H1 (cell line): ENCODE measurements at regions of chr20 and their contacts with region 1.

Region 1: GRCh38 chr20:32999603-33000250 is 4.5 kb downstream of the SUN5 start:
- DNase-seq: no peak
- H3K4me3 ChIP-seq: no peak overlapping the region
- H3K27ac ChIP-seq: no peak overlapping the region
- H3K4me1 ChIP-seq: no peaks in the 10 kb centered on the region; a peak in 1 of 7 replicates
- H3K27me3 ChIP-seq: no peaks in the 10 kb centered on the region
- CTCF ChIP-seq: no peak
- EP300 ChIP-seq: no peak
- POLR2A ChIP-seq: no peak
- RAD21 ChIP-seq: no peak

Region 2: GRCh38 chr20:32982617-32983458 is 16.9 kb before region 1 on chr20:
- CTCF ChIA-PET with region 1: interaction called, 53 read pairs
- POLR2A ChIA-PET with region 1: interaction called, 3 read pairs
- DNase-seq: no peak
- H3K4me3 ChIP-seq: no peak overlapping the region
- H3K27ac ChIP-seq: no peak overlapping the region
- H3K4me1 ChIP-seq: no peaks in the 10 kb centered on the region; a peak in 1 of 7 replicates
- H3K27me3 ChIP-seq: 0 out of 7 replicates have a peak, but pooled peaks cover 0 to under 1% (median 0%) of the 10 kb centered on the region in 4 experiments
- CTCF ChIP-seq: no peak
- EP300 ChIP-seq: no peak
- POLR2A ChIP-seq: no peak
- RAD21 ChIP-seq: no peak

Region 3: DNA sequence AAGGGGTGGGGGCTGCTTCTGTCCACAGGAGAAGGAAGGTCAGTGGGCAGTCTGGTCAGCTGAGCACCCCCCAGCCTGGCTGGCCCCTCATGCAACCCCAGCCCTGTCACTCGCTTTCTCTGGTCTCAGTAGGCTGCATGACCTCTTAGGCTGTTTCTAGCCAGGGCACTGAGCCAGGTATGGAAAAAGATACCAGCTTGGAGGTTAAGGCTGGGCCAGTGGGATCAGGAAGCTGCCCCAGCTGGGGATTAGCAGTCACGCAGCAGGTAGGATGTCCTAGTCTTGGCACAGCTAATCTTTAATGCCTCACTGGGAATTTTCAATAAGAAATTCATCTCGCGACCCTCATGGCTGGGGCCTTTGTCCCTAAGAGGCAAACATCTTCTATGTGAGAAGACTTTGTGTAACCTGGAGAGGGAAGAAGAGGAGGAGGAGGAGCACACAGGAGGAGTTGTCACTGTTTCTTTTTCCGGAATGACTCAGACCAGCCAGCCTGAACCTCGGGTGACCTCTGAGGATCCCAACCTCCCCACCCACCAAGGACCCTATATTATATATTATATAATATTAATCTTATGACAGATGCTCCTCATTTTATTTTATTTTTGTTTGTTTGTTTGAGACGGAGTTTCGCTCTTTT is 165.8 kb after region 1 on chr20:
- CTCF ChIA-PET with region 1: no interaction called
- POLR2A ChIA-PET with region 1: no interaction called
- DNase-seq: peak in 1 of 2 experiments; percentile 33
- H3K4me3 ChIP-seq: no peak overlapping the region
- H3K27ac ChIP-seq: no peak overlapping the region
- H3K4me1 ChIP-seq: no peaks in the 10 kb centered on the region
- H3K27me3 ChIP-seq: no peaks in the 10 kb centered on the region
- CTCF ChIP-seq: no peak
- EP300 ChIP-seq: no peak
- POLR2A ChIP-seq: no peak
- RAD21 ChIP-seq: no peak